IMR-90 (cell line): ENCODE measurements at regions of chr13 and their contacts with region 1.

Region 1: DNA sequence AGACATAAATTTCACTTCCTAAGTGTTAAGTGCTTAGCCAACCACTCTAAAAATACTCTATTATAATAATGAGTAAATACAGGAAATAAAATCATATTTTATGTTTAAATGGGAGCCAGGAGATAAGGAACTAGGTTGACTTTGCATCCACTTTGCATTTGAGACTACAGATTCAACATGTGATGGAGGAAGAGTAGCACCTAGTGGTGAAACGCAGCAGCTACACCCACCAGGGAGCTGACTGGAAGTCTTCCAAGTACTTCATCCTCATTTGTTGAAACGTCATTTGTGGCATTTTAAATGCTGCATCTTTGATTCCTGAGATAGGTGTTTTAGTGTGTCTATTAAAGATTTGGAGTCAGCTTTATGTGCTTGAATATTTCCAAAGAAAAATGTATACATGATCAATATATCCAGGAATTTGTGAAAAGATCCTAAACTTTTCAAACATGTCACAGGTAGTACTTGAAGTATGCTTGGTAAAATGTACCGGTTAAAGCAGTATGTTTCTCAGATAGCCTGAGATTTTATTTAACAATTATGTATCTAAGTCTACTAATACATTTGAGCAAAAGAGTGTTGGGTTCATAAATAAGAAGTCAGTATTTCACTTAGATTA is 17.4 kb upstream of the KCTD12 start:
- DNase-seq: peak; percentile 80
- ATAC-seq: peak; percentile 92
- H3K4me3 ChIP-seq: no peak overlapping the region
- H3K27ac ChIP-seq: no peak overlapping the region
- H3K4me1 ChIP-seq: no peaks in the 10 kb centered on the region
- H3K27me3 ChIP-seq: peaks cover 23% of the 10 kb centered on the region
- CTCF ChIP-seq: peak; percentile 97
- POLR2A ChIP-seq: no peak
- RAD21 ChIP-seq: peak; percentile 98

Region 2: GRCh38 chr13:75566658-75567057 is 1337.0 kb before region 1 on chr13:
- CTCF ChIA-PET with region 1: no interaction called
- POLR2A ChIA-PET with region 1: no interaction called
- dilution Hi-C with region 1: no loop called
- in situ Hi-C with region 1: no loop called
- intact Hi-C with region 1: loop called (anchors 5 kb)
- DNase-seq: peak; percentile 71
- ATAC-seq: peak; percentile 79
- H3K4me3 ChIP-seq: no peak overlapping the region
- H3K27ac ChIP-seq: no peak overlapping the region
- H3K4me1 ChIP-seq: peaks cover 3% of the 10 kb centered on the region
- H3K27me3 ChIP-seq: no peaks in the 10 kb centered on the region
- CTCF ChIP-seq: peak; percentile 62
- POLR2A ChIP-seq: no peak
- RAD21 ChIP-seq: peak; percentile 71

Region 3: GRCh38 chr13:75687150-75687763 is 1216.4 kb before region 1 on chr13:
- CTCF ChIA-PET with region 1: no interaction called
- POLR2A ChIA-PET with region 1: no interaction called
- dilution Hi-C with region 1: no loop called
- in situ Hi-C with region 1: loop called (anchors 25 kb)
- intact Hi-C with region 1: loop called (anchors 5 kb)
- DNase-seq: peak; percentile 68
- ATAC-seq: peak; percentile 40
- H3K4me3 ChIP-seq: no peak overlapping the region
- H3K27ac ChIP-seq: no peak overlapping the region
- H3K4me1 ChIP-seq: peaks cover 21% of the 10 kb centered on the region
- H3K27me3 ChIP-seq: no peaks in the 10 kb centered on the region
- CTCF ChIP-seq: peak; percentile 59
- POLR2A ChIP-seq: no peak
- RAD21 ChIP-seq: peak; percentile 43

Region 4: GRCh38 chr13:75876360-75877050 is 1027.1 kb before region 1 on chr13:
- CTCF ChIA-PET with region 1: interaction called, 4 read pairs
- POLR2A ChIA-PET with region 1: no interaction called
- dilution Hi-C with region 1: no loop called
- in situ Hi-C with region 1: loop called (anchors 5 kb)
- intact Hi-C with region 1: loop called (anchors 2 kb)
- DNase-seq: peak; percentile 73
- ATAC-seq: peak; percentile 81
- H3K4me3 ChIP-seq: no peak overlapping the region
- H3K27ac ChIP-seq: no peak overlapping the region; the same call in 1 of the 2 replicates
- H3K4me1 ChIP-seq: peaks cover 5% of the 10 kb centered on the region
- H3K27me3 ChIP-seq: peaks cover 4% of the 10 kb centered on the region
- CTCF ChIP-seq: peak; percentile 92
- POLR2A ChIP-seq: no peak
- RAD21 ChIP-seq: peak; percentile 93

Region 5: GRCh38 chr13:76383676-76384461 is 519.8 kb before region 1 on chr13:
- CTCF ChIA-PET with region 1: no interaction called
- POLR2A ChIA-PET with region 1: no interaction called
- dilution Hi-C with region 1: no loop called
- in situ Hi-C with region 1: no loop called
- intact Hi-C with region 1: loop called (anchors 10 kb)
- DNase-seq: peak; percentile 94
- ATAC-seq: peak; percentile 95
- H3K4me3 ChIP-seq: no peak overlapping the region
- H3K27ac ChIP-seq: peak overlapping the region; percentile 58; the same call in 1 of the 2 replicates
- H3K4me1 ChIP-seq: peaks cover 4% of the 10 kb centered on the region; the same call in 1 of the 2 replicates
- H3K27me3 ChIP-seq: peaks cover 20% of the 10 kb centered on the region
- CTCF ChIP-seq: no peak
- POLR2A ChIP-seq: no peak
- RAD21 ChIP-seq: no peak

Region 6: DNA sequence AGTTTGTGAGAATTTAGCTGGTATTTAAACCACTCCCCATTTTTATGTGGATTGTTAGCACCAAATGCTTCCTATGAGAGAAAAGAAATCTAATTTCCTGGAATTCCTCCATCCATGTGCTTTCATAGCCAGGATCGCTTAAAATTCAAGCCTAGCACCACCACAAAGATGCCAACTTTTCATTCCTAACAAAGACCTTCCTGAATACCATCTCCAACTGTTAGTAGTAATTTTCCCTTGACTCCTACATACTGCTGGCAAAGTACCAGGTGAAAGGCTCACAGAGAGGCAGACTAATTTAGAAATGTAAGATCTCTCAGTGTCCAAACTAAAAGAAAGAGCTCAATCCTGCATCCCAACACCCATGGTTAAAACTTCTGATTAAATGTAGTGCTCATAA is 403.8 kb before region 1 on chr13:
- CTCF ChIA-PET with region 1: no interaction called
- POLR2A ChIA-PET with region 1: no interaction called
- dilution Hi-C with region 1: no loop called
- in situ Hi-C with region 1: loop called (anchors 25 kb)
- intact Hi-C with region 1: no loop called
- DNase-seq: no peak
- ATAC-seq: no peak
- H3K4me3 ChIP-seq: no peak overlapping the region
- H3K27ac ChIP-seq: no peak overlapping the region
- H3K4me1 ChIP-seq: no peaks in the 10 kb centered on the region
- H3K27me3 ChIP-seq: peaks cover 18% of the 10 kb centered on the region
- CTCF ChIP-seq: no peak
- POLR2A ChIP-seq: no peak
- RAD21 ChIP-seq: no peak

Region 7: DNA sequence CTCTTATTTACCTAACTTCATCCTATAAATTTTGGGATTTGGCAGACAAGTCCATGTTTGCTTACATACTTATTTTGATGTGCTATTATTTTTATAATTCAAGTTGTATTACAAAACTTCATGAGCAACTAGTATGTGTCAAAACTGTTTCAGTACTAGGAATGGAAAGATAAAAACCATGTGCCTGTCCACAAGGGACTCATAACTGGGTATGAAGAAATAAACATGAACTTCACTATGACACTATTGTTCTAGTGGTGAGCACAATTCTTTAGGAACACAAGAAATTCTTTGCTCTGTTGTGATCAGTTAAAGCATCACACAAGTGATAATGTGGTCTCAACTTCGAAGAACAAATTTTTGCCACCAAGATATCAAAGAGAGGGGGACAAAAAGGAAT is 220.8 kb after region 1 on chr13:
- CTCF ChIA-PET with region 1: no interaction called
- POLR2A ChIA-PET with region 1: no interaction called
- dilution Hi-C with region 1: no loop called
- in situ Hi-C with region 1: no loop called
- intact Hi-C with region 1: no loop called
- DNase-seq: no peak
- ATAC-seq: no peak
- H3K4me3 ChIP-seq: no peak overlapping the region
- H3K27ac ChIP-seq: no peak overlapping the region
- H3K4me1 ChIP-seq: no peaks in the 10 kb centered on the region
- H3K27me3 ChIP-seq: no peaks in the 10 kb centered on the region
- CTCF ChIP-seq: no peak
- POLR2A ChIP-seq: no peak
- RAD21 ChIP-seq: no peak